ENCODE measurements at regions of chr16 and their contacts with region 1.

Region 1: GRCh38 chr16:88941913-88942909 is 34.8 kb downstream of the CBFA2T3 start:
- DNase-seq: peak in 3 of 5 donors; percentile 52 to 85 (median 61)
- ATAC-seq: peak in 3 of 4 donors; percentile 31 to 51 (median 48)
- H3K4me3 ChIP-seq: peak overlapping the region in 11 of 12 donors; percentile 11 to 86 (median 68)
- H3K27ac ChIP-seq: peak overlapping the region in 4 of 12 donors; percentile 29 to 95 (median 66)
- H3K4me1 ChIP-seq: peaks cover 9 to 39% (median 31%) of the 10 kb centered on the region in 12 donors
- H3K27me3 ChIP-seq: peaks cover 0 to 28% (median 7%) of the 10 kb centered on the region in 9 donors
- CTCF ChIP-seq: peak; percentile 42 to 95 (median 72)
- POLR2A ChIP-seq: no peak

Region 2: GRCh38 chr16:88886845-88887521 is 55.2 kb before region 1 on chr16:
- intact Hi-C with region 1: loop called in 7 of 10 experiments (anchors 1 to 5 kb)
- DNase-seq: peak; percentile 92 to 97 (median 94)
- ATAC-seq: peak; percentile 81 to 92 (median 88)
- H3K4me3 ChIP-seq: peak overlapping the region in 1 of 12 donors; percentile 3
- H3K27ac ChIP-seq: peak overlapping the region; percentile 31 to 94 (median 81)
- H3K4me1 ChIP-seq: peaks cover 0 to 39% (median 28%) of the 10 kb centered on the region in 12 donors
- H3K27me3 ChIP-seq: no peaks in the 10 kb centered on the region
- CTCF ChIP-seq: peak in 11 of 12 donors; percentile 12 to 59 (median 38)
- POLR2A ChIP-seq: no peak

Region 3: GRCh38 chr16:88920618-88921590 is 21.3 kb before region 1 on chr16:
- intact Hi-C with region 1: loop called in 3 of 10 experiments (anchors 2 kb)
- DNase-seq: peak; percentile 85 to 89 (median 87)
- ATAC-seq: peak; percentile 66 to 92 (median 80)
- H3K4me3 ChIP-seq: peak overlapping the region in 9 of 12 donors; percentile 2 to 43 (median 34)
- H3K27ac ChIP-seq: peak overlapping the region; percentile 6 to 90 (median 78)
- H3K4me1 ChIP-seq: peaks cover 10 to 73% (median 51%) of the 10 kb centered on the region in 12 donors
- H3K27me3 ChIP-seq: no peaks in the 10 kb centered on the region
- CTCF ChIP-seq: no peak
- POLR2A ChIP-seq: no peak

Region 4: GRCh38 chr16:89093602-89094251 is 151.5 kb after region 1 on chr16 and contains the start of gene ACSF3:
- intact Hi-C with region 1: loop called in 6 of 10 experiments (anchors 5 to 10 kb)
- DNase-seq: peak; percentile 61 to 89 (median 71)
- ATAC-seq: peak; percentile 70 to 92 (median 90)
- H3K4me3 ChIP-seq: peak within 1 kb of the TSS; percentile 73 to 99 (median 84)
- H3K27ac ChIP-seq: peak within 1 kb of the TSS in 11 of 12 donors; percentile 24 to 84 (median 74)
- H3K4me1 ChIP-seq: peaks cover 6 to 45% (median 18%) of the 10 kb centered on the region in 12 donors
- H3K27me3 ChIP-seq: peaks cover 0 to 23% (median 9%) of the 10 kb centered on the region in 9 donors
- CTCF ChIP-seq: no peak
- POLR2A ChIP-seq: no peak
- total RNA-seq, gene ACSF3: 10.3 to 26.3 (median 19.3) TPM

Region 5: DNA sequence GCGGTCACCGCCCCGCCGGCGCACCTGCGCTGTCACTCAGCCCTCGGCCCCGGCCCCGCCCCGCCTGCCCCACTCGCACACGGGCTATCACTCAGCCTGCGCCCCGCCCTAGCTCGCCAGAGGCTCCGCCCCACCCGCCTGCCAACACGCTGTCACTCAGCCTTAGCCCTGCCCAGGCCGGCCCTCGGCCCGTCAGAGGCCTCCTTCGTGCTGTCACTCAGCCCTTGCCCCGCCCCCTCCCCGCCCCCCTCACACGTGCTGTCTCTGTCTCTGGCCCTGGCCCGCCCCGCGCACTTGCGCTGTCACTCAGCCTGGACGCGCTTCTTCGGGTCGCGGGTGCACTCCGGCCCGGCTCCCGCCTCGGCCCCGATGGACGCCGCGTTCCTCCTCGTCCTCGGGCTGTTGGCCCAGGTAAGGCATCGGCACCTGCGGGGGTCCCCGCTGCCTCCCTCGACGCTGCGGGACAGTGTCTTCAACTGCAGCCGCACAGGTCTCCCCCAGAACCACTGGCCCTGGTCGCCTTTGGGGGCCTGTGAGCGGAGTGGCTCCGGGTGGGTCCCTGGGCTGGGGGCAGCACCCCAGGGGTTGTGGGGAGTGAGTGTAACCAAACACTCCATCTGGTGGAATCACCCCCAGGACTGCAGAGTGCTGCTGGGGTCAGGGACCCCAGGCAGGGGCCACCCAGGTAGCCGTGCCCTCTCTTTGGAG is 229.4 kb after region 1 on chr16 and contains the start of gene CDH15:
- intact Hi-C with region 1: loop called (anchors 1 to 5 kb)
- DNase-seq: peak; percentile 85 to 95 (median 92)
- ATAC-seq: peak; percentile 91 to 96 (median 94)
- H3K4me3 ChIP-seq: peak within 1 kb of the TSS in 10 of 12 donors; percentile 5 to 44 (median 40)
- H3K27ac ChIP-seq: no peak within 1 kb of the TSS
- H3K4me1 ChIP-seq: peaks cover 0 to 20% (median 12%) of the 10 kb centered on the region in 12 donors
- H3K27me3 ChIP-seq: peaks cover 4 to 61% (median 29%) of the 10 kb centered on the region in 9 donors
- CTCF ChIP-seq: no peak
- POLR2A ChIP-seq: no peak
- total RNA-seq, gene CDH15: 0.16 to 0.32 TPM in 2 of 9 donors, not detected in the others

Region 6: GRCh38 chr16:89217388-89218191 is 275.4 kb after region 1 on chr16 and contains the start of gene ZNF778:
- intact Hi-C with region 1: loop called (anchors 1 to 10 kb)
- DNase-seq: peak; percentile 84 to 91 (median 88)
- ATAC-seq: peak; percentile 88 to 97 (median 96)
- H3K4me3 ChIP-seq: peak within 1 kb of the TSS; percentile 62 to 100 (median 92)
- H3K27ac ChIP-seq: peak within 1 kb of the TSS; percentile 89 to 99 (median 95)
- H3K4me1 ChIP-seq: peaks cover 0 to 31% (median 20%) of the 10 kb centered on the region in 12 donors
- H3K27me3 ChIP-seq: no peaks in the 10 kb centered on the region
- CTCF ChIP-seq: no peak
- POLR2A ChIP-seq: peak; percentile 11 to 90
- total RNA-seq, gene ZNF778: 6.9 to 14.6 (median 9.9) TPM

Region 7: GRCh38 chr16:89289428-89290395 is 347.5 kb after region 1 on chr16:
- intact Hi-C with region 1: loop called in 1 of 10 experiments (anchors 5 kb)
- DNase-seq: peak; percentile 59 to 85 (median 76)
- ATAC-seq: peak; percentile 48 to 83 (median 79)
- H3K4me3 ChIP-seq: no peak overlapping the region
- H3K27ac ChIP-seq: no peak overlapping the region
- H3K4me1 ChIP-seq: peaks cover 0 to 17% (median 5%) of the 10 kb centered on the region in 12 donors
- H3K27me3 ChIP-seq: no peaks in the 10 kb centered on the region
- CTCF ChIP-seq: peak; percentile 68 to 88 (median 82)
- POLR2A ChIP-seq: no peak